Thyroid gland (tissue), 4 donors: ENCODE measurements at regions of chr6 and their contacts with region 1.

Region 1: GRCh38 chr6:160030103-160030502 is 61.2 kb downstream of the IGF2R start:
- DNase-seq: peak; percentile 94 to 97
- H3K4me3 ChIP-seq: no peak overlapping the region
- H3K27ac ChIP-seq: peak overlapping the region; percentile 76 to 82 (median 76)
- H3K4me1 ChIP-seq: peaks cover 16 to 21% of the 10 kb centered on the region in 2 donors
- H3K27me3 ChIP-seq: no peaks in the 10 kb centered on the region
- CTCF ChIP-seq: peak in 3 of 6 experiments; percentile 19 to 48 (median 20)
- POLR2A ChIP-seq: peak in 1 of 2 donors; percentile 42

Region 2: DNA sequence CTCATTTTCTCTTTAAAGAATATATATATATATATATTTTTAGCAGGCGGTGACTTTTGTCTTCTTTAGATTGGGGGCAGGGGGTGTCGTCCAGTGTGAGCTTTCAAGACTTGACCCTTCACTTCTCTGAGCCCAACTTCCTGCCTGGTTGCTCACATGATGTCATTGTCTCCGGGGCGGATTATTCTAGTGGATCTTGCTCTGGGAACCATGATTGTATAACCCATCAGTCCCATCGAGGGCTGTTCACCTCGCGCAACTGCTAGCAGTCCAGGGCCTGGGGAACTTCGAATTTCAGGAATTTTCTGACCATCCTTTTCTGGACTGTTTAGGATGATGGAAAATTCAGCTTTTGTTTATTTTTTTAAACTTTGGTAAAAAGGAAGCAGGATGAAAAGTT is 60.2 kb before region 1 on chr6:
- intact Hi-C with region 1: loop called (anchors 10 kb)
- DNase-seq: peak; percentile 65 to 68
- H3K4me3 ChIP-seq: peak overlapping the region in 2 of 3 donors; percentile 95 to 98
- H3K27ac ChIP-seq: peak overlapping the region; percentile 83 to 97 (median 94)
- H3K4me1 ChIP-seq: peaks cover 39 to 40% of the 10 kb centered on the region in 2 donors
- H3K27me3 ChIP-seq: no peaks in the 10 kb centered on the region
- CTCF ChIP-seq: no peak
- POLR2A ChIP-seq: peak in 1 of 2 donors; percentile 58

Region 3: DNA sequence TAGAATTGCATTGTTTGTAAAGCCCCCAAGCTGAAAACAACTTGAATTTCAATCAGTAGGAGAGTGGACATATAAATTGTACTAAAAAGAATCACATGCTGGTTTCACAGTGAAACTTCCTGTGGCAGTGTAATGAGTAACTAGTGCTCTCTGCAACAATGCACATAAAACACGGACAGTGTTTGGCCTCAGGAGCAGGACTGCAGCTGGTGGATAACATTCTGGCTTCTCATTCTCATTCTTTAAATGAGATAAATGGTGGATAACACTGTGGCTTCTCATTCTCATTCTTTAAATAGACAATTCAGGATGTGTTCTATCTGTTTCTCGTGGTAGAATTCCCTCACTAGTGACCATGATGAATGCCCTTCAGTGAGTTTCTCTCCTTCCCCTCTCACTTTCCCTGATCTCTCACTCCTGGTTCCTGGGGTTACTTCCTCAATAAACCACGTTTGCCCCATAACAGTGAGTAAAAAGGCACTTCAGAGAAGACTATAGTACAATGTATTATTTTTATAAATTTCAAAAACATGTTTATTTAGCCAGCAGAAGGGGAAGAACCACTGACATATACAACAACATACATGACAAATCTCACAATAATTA is 168.6 kb after region 1 on chr6:
- intact Hi-C with region 1: no loop called
- DNase-seq: no peak
- H3K4me3 ChIP-seq: no peak overlapping the region
- H3K27ac ChIP-seq: no peak overlapping the region
- H3K4me1 ChIP-seq: peaks cover 5 to 7% of the 10 kb centered on the region in 2 donors
- H3K27me3 ChIP-seq: no peaks in the 10 kb centered on the region
- CTCF ChIP-seq: no peak
- POLR2A ChIP-seq: no peak